A673 (cell line): ENCODE measurements at regions of chr7 and their contacts with region 1.

Region 1: GRCh38 chr7:50092579-50093491 is at the start of gene ZPBP:
- DNase-seq: peak; percentile 59
- H3K4me3 ChIP-seq: peak within 1 kb of the TSS; percentile 38
- H3K27ac ChIP-seq: no peak within 1 kb of the TSS
- H3K4me1 ChIP-seq: no peaks in the 10 kb centered on the region
- H3K27me3 ChIP-seq: peaks cover 17% of the 10 kb centered on the region
- CTCF ChIP-seq: peak; percentile 82
- total RNA-seq, gene ZPBP: not detected in 2 replicates

Region 2: DNA sequence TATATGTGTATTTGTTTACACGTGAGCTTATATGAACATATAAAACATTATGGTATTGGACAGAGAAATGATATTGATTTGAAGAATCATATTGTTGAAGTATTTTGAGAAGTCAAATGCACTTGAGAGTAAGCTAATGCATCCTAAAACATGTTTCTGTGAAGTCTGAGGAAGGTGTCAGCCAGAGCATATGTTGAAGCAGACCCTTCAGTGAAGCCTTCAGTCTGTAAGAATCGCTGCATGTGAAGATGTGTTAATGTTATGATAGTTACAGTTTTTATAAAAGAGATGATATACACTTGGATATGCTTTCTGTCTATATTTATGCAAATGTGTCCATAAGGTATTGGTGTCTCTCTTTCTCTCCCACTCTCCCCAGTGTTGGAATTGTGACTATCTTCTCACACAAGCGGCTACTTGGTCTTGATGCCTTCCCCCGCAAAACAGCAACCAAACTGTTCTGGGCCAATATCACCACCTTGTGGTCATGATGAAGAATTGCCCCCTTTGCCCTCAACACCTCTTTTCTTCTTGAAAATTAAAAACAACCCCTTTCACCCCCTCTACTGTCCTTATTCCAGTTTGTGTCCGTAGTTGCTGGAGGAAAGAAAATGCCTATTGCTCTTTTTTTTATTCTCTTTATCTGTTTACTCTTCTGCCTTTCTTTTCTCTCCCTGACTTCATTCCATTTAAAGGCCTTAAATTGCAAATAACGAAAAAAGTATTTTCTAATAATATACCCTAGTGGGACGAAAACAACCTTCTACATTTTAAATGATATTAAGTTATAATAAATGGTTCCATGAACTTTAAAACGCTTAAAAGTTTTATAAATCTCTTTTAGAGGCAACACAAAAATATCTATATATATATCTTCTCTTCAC is 276.6 kb after region 1 on chr7:
- CTCF ChIA-PET with region 1: interaction called, 3 read pairs
- POLR2A ChIA-PET with region 1: no interaction called
- intact Hi-C with region 1: loop called (anchors 5 kb)
- DNase-seq: peak; percentile 79
- H3K4me3 ChIP-seq: no peak overlapping the region
- H3K27ac ChIP-seq: no peak overlapping the region
- H3K4me1 ChIP-seq: no peaks in the 10 kb centered on the region
- H3K27me3 ChIP-seq: no peaks in the 10 kb centered on the region
- CTCF ChIP-seq: peak; percentile 71

Region 3: DNA sequence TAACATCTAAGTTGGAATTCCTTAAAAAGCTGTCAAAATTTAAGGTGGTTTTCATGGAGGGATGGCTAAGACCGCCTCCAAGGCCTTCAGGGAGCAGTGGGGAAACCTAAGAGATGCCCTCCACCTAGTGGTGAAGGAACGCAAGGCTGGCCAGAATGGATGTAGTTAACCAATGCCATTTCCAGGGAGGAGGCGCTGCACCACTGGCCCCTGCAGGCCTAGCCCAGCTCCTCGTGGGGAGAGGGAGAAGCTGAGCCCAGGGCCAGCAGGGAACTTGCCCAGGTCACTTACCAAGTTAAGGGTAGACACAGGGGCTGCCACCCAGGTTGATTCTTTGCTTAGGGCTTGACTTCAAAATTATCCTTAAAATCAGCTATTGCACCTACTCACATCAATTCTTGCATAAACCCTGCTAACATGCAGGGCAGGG is 325.3 kb after region 1 on chr7:
- CTCF ChIA-PET with region 1: interaction called, 5 read pairs
- POLR2A ChIA-PET with region 1: no interaction called
- intact Hi-C with region 1: loop called (anchors 1 kb)
- DNase-seq: peak; percentile 86
- H3K4me3 ChIP-seq: no peak overlapping the region
- H3K27ac ChIP-seq: no peak overlapping the region
- H3K4me1 ChIP-seq: no peaks in the 10 kb centered on the region
- H3K27me3 ChIP-seq: no peaks in the 10 kb centered on the region
- CTCF ChIP-seq: peak; percentile 89

Region 4: DNA sequence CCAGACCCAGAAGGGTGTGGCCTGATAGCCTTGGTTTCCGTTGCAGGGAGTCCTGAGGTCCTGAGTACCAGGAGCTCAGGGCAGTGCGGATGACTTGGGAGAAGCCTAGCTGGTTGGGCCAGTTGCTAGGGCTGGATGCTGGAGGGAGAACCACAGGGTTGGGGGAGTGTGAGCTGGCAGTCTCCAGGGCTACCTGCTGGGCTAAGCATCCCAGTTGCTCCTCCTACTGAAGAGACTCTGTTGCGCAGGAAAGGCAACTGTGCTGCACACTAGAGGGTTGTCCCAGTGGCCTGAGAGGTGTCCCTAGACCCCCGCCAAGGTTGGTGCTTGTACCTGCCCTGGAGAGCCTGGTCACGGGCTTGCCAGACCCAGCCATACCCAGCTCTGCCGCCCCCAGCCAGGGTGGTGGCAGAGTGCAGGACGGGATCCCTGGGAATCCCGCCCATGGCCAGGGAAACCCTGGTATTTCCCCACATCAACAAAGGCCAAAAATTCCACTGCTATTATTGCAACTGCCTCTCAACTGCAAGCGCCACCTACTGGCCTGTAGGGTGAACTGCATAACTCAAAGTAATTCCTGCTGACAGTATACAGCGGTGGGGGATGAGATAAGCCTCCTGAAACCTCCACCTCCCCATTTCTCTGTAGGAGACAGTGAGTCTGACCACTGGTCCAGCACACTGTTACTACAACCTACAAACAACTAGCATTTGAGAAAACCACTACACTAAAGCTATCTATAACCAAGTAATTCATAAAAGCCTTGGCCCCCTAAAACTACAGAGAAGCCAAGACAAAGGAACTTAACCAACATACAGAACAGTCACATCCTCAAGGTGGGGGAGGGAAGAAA is 540.0 kb after region 1 on chr7:
- CTCF ChIA-PET with region 1: no interaction called
- POLR2A ChIA-PET with region 1: no interaction called
- intact Hi-C with region 1: loop called (anchors 2 kb)
- DNase-seq: peak; percentile 62
- H3K4me3 ChIP-seq: no peak overlapping the region
- H3K27ac ChIP-seq: no peak overlapping the region
- H3K4me1 ChIP-seq: no peaks in the 10 kb centered on the region
- H3K27me3 ChIP-seq: no peaks in the 10 kb centered on the region
- CTCF ChIP-seq: peak; percentile 89

Region 5: DNA sequence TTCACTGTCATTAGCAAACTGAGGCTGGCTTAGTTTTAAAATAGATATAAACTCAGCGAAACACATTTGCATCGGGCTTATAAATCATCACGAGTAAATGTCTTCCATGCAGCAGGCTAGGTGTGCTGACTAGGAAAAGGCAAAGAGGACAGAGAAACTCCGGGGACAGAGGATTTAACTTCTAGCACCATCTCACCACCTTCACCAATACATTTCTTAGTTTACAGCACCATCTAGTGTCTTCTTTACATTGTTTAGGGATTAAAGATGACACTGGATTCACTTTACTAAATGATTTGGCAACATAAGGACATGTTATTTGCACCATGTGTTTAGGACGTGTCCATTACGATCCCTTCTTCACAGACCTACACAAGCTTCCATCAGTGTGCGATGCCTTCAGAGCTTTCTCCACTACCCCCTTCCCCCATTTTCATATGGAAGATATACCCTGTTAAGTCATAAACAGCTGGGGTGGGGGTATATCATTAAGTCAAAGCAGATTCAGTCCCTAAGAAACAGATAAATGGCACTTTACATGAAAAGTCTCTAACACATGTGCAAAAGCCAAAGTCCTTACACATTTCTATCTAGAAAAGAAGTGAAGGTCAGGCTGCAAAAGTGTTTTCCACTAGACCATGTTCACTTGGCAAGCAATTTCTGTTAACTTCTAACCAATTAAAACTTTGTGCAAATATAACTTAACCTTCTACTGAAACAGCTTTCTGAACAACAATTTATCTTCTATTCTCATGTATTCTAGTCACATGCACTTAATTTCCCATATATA is 586.6 kb after region 1 on chr7:
- CTCF ChIA-PET with region 1: no interaction called
- POLR2A ChIA-PET with region 1: no interaction called
- intact Hi-C with region 1: loop called (anchors 2 kb)
- DNase-seq: peak; percentile 55
- H3K4me3 ChIP-seq: no peak overlapping the region
- H3K27ac ChIP-seq: no peak overlapping the region
- H3K4me1 ChIP-seq: no peaks in the 10 kb centered on the region
- H3K27me3 ChIP-seq: peaks cover 11% of the 10 kb centered on the region
- CTCF ChIP-seq: peak; percentile 40; the same call in 1 of the 2 replicates

Region 6: DNA sequence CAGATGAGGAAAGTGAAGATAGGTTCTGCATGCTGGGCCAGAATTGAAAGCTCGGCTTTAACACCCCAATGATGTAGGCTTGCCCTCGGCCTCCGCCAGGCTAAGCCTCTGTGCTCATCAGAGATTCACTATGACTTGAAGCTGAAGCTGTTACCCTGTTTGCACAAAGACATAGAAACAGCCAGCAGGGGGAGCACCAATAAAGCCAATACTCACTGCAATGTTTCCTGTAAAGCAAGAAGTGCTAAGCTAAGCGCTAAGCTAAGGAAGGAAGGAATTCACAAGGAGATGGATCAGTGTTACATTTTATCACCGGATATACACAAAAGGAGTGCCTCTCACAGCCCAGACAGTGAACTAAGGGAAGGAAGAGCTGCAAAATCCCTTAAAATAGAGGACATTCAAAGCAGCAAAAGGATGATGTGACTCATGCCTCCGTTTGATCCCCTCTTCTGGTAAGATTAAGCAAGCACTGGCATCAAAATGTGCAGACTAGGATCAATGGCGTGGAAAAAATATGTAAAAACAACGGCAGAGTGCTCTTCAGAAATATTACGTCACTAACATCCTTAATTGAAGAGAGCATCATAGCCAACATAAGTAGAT is 1070.0 kb after region 1 on chr7:
- CTCF ChIA-PET with region 1: interaction called, 14 read pairs
- POLR2A ChIA-PET with region 1: no interaction called
- intact Hi-C with region 1: loop called (anchors 2 kb)
- DNase-seq: peak; percentile 77
- H3K4me3 ChIP-seq: no peak overlapping the region
- H3K27ac ChIP-seq: no peak overlapping the region
- H3K4me1 ChIP-seq: no peaks in the 10 kb centered on the region
- H3K27me3 ChIP-seq: no peaks in the 10 kb centered on the region
- CTCF ChIP-seq: peak; percentile 83

Region 7: DNA sequence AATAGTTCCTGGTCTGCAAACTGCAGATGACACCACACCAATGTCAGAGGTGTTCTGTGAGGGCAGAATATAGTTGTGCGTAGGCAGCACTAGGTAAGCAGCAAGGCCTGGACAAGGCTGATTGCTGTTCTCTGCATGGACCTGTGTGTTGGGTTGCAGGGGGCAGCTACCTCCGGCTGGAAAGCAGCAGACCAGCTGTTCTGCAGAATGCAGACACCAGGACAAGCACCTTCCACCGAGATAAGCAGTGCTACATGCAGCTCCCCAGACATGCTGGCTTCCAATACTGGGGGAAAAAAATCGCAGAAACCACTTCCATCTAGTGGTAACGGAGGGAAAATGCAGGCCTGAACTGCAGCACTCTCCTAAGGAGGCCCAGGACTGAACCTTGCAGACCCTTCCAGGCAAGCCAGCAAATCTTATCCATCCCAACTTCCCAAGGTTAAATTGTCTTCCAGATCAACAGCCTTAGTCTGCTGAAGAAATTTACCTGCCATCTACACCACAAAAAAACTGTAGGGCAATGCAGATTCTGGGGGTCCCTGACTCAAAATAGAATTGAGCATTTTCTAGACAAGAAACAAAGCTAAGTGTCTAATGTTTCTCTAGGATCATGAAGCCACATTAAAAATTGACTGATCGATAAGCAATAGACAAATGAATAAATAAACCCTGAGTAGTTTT is 1274.2 kb after region 1 on chr7:
- CTCF ChIA-PET with region 1: no interaction called
- POLR2A ChIA-PET with region 1: no interaction called
- intact Hi-C with region 1: loop called (anchors 5 kb)
- DNase-seq: peak; percentile 7
- H3K4me3 ChIP-seq: no peak overlapping the region
- H3K27ac ChIP-seq: no peak overlapping the region
- H3K4me1 ChIP-seq: no peaks in the 10 kb centered on the region
- H3K27me3 ChIP-seq: no peaks in the 10 kb centered on the region
- CTCF ChIP-seq: peak; percentile 42